WTC11 (cell line): ENCODE measurements at regions of chr18 and their contacts with region 1.

Region 1: DNA sequence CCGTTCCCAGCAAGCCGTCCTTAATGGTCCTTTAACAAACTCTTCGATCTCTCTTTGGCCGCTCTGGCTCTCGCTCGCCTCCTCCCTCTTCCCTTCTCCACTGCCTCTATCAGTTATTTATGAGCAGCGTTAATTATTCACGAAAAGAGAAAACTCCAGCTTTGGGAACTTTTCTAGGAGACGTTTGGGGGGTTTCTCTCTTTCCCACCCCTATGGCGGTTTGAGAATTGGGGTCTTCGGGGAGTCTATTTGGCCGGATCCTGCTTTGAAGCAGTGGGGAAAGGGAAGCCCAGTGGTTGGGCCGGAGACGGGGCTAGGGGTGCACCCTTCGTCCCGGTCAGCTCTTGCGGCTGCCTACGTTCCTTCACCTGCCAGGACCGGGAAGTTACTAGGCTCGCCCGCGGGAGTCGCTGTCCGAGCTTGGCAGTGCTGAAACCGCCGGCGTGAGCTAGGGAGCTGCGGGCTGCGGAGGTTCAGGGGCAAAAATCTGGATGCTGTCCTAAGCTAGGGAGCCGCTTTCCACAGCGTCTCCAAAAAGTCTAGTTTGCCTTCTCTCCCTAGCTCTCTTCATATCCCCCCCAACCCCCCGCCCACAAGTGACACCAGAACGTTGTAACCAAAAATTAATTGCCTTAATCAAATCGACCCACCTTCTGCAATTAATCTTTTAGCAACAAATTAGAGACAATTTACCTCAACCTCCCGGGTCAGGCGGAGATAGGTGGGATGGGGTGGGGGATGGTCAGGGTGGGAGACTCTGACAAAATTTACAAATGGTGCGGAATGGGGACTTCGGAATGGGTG is 8.9 kb upstream of the SKOR2 start:
- DNase-seq: peak; percentile 93
- ATAC-seq: peak; percentile 40
- H3K4me3 Mint-ChIP-seq: peak overlapping the region; percentile 54
- H3K27ac Mint-ChIP-seq: no peak overlapping the region
- H3K4me1 Mint-ChIP-seq: peaks cover 48% of the 10 kb centered on the region
- H3K27me3 Mint-ChIP-seq: peaks cover 100% of the 10 kb centered on the region
- CTCF ChIP-seq: no peak

Region 2: GRCh38 chr18:47247036-47247832 is 13.1 kb before region 1 on chr18:
- CTCF ChIA-PET with region 1: interaction called, 36 read pairs
- POLR2A ChIA-PET with region 1: interaction called, 4 read pairs
- DNase-seq: peak; percentile 71
- ATAC-seq: peak; percentile 68
- H3K4me3 Mint-ChIP-seq: peak overlapping the region; percentile 69
- H3K27ac Mint-ChIP-seq: no peak overlapping the region
- H3K4me1 Mint-ChIP-seq: peaks cover 66% of the 10 kb centered on the region
- H3K27me3 Mint-ChIP-seq: peaks cover 61% of the 10 kb centered on the region
- CTCF ChIP-seq: peak; percentile 82

Region 3: DNA sequence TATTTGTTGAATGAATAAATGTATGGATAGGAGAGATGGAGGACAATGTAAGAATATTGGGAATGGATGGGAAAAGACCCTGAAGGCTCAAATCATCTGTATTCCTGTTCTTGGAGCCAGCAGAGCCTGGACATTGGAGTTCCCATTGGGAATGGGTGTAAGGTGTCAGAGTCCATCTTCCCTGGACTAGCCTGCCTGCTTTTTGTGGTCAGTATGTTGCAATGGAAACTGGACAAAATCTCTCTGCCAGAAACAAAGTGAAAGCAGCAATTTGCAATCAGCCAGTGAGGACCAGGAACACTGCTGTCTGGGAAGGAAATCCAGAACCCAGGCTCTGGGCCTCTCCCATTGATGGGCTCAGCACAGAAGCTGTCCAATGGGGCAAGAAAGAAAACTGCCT is 74.6 kb after region 1 on chr18:
- CTCF ChIA-PET with region 1: no interaction called
- POLR2A ChIA-PET with region 1: no interaction called
- DNase-seq: no peak
- ATAC-seq: no peak
- H3K4me3 Mint-ChIP-seq: no peak overlapping the region
- H3K27ac Mint-ChIP-seq: no peak overlapping the region
- H3K4me1 Mint-ChIP-seq: no peaks in the 10 kb centered on the region
- H3K27me3 Mint-ChIP-seq: no peaks in the 10 kb centered on the region; the same call in 1 of the 2 replicates
- CTCF ChIP-seq: no peak